A673 (cell line): ENCODE measurements at regions of chr11 and their contacts with region 1.

Region 1: GRCh38 chr11:69209421-69210309 is 53.9 kb downstream of the SMIM38 start:
- DNase-seq: no peak
- H3K4me3 ChIP-seq: no peak overlapping the region
- H3K27ac ChIP-seq: peak overlapping the region; percentile 22
- H3K4me1 ChIP-seq: peaks cover 27% of the 10 kb centered on the region
- H3K27me3 ChIP-seq: no peaks in the 10 kb centered on the region
- CTCF ChIP-seq: no peak

Region 2: DNA sequence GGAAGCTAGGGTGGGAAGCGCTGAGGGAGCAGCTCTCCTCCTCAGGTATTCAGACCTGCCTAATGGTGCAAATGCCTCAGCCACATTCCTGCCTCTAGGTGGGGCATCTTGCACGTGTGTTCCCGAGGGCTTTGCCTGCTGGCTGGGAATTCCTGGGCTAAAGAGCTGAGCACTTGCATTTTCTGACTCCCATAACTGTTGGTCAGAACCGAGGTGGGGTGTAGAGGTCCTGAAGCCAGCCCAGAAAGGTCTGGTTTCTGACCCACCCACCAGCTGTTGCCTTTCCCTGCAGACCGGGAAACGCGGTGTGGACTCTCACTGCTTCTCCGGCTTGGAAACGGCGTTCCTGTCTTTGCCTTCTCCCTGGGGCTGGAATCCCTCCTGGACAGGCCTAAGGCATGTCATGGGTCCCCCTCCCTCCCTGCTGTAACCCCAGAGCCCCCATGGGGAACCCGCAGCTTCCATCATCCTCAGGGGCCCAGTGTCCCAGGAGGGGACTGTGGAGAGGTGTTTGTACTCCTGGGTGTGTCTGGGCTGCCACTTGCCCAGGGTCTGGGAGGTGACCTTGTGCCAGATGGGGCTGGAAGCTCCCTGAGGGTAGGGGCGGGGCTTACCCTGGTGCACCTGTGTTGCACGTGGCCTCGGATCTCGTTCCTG is 77.9 kb before region 1 on chr11:
- CTCF ChIA-PET with region 1: no interaction called
- POLR2A ChIA-PET with region 1: interaction called, 7 read pairs
- intact Hi-C with region 1: loop called (anchors 5 kb)
- DNase-seq: peak; percentile 88
- H3K4me3 ChIP-seq: no peak overlapping the region
- H3K27ac ChIP-seq: peak overlapping the region; percentile 91
- H3K4me1 ChIP-seq: peaks cover 28% of the 10 kb centered on the region
- H3K27me3 ChIP-seq: no peaks in the 10 kb centered on the region
- CTCF ChIP-seq: peak; percentile 97

Region 3: GRCh38 chr11:69691449-69691848 is 481.8 kb after region 1 on chr11:
- CTCF ChIA-PET with region 1: no interaction called
- POLR2A ChIA-PET with region 1: interaction called, 13 read pairs
- intact Hi-C with region 1: no loop called
- DNase-seq: no peak
- H3K4me3 ChIP-seq: no peak overlapping the region
- H3K27ac ChIP-seq: no peak overlapping the region
- H3K4me1 ChIP-seq: no peaks in the 10 kb centered on the region
- H3K27me3 ChIP-seq: no peaks in the 10 kb centered on the region
- CTCF ChIP-seq: no peak

Region 4: GRCh38 chr11:70265341-70265740 is 1055.7 kb after region 1 on chr11:
- CTCF ChIA-PET with region 1: no interaction called
- POLR2A ChIA-PET with region 1: no interaction called
- intact Hi-C with region 1: loop called (anchors 5 kb)
- DNase-seq: peak; percentile 48
- H3K4me3 ChIP-seq: no peak overlapping the region
- H3K27ac ChIP-seq: peak overlapping the region; percentile 82
- H3K4me1 ChIP-seq: peaks cover 42% of the 10 kb centered on the region
- H3K27me3 ChIP-seq: no peaks in the 10 kb centered on the region
- CTCF ChIP-seq: no peak